Pancreas (tissue), 10 donors: ENCODE measurements at regions of chr14 and their contacts with region 1.

Region 1: DNA sequence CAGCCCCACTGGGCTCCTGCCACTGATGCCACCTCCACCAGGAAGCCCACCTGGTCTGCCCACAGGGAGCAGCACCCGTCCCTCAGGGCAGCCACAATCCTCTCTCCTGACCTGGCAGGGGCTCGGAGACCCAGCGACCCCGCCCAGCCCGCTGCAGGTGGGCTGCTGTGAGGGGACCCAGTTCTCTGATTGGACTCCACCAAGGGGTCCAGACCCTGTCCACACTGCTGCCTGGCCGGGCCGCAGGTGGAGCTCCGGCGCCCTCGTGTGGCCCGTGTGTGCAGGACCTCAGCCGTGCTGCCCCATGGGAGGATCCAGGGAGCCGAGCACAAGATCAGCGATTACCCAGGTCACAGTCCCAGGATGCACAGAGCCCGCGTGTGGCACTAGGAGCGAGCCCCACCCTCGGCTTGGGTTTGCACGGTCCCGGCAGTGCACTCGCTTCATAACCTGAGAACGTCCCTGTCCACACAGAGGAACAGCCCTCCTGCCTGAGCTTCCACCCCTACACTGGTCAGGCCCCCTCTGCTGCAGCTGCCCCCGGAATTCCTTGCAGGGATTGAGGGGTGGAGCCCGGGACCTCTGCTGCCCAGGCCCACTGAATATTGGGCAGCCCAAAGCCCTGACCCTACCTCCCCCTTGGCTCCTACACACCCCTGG is 35.4 kb upstream of the TMEM179 start:
- DNase-seq: peak in 5 of 6 donors; percentile 35 to 89 (median 74)
- ATAC-seq: peak; percentile 90 to 96 (median 94)
- H3K4me3 ChIP-seq: no peak overlapping the region
- H3K27ac ChIP-seq: no peak overlapping the region
- H3K4me1 ChIP-seq: peaks cover 0 to 6% (median 0%) of the 10 kb centered on the region in 3 donors
- H3K27me3 ChIP-seq: no peaks in the 10 kb centered on the region
- CTCF ChIP-seq: peak; percentile 73 to 87 (median 84)

Region 2: GRCh38 chr14:104137297-104138097 is 502.5 kb before region 1 on chr14:
- intact Hi-C with region 1: loop called in 2 of 3 experiments (anchors 5 to 10 kb)
- DNase-seq: peak; percentile 44 to 93 (median 79)
- ATAC-seq: peak; percentile 87 to 93 (median 91)
- H3K4me3 ChIP-seq: peak overlapping the region; percentile 33 to 51 (median 48)
- H3K27ac ChIP-seq: no peak overlapping the region
- H3K4me1 ChIP-seq: peaks cover 4 to 9% (median 5%) of the 10 kb centered on the region in 3 donors
- H3K27me3 ChIP-seq: peaks cover 0 to 14% (median 3%) of the 10 kb centered on the region in 4 donors
- CTCF ChIP-seq: peak; percentile 91 to 94 (median 93)

Region 3: DNA sequence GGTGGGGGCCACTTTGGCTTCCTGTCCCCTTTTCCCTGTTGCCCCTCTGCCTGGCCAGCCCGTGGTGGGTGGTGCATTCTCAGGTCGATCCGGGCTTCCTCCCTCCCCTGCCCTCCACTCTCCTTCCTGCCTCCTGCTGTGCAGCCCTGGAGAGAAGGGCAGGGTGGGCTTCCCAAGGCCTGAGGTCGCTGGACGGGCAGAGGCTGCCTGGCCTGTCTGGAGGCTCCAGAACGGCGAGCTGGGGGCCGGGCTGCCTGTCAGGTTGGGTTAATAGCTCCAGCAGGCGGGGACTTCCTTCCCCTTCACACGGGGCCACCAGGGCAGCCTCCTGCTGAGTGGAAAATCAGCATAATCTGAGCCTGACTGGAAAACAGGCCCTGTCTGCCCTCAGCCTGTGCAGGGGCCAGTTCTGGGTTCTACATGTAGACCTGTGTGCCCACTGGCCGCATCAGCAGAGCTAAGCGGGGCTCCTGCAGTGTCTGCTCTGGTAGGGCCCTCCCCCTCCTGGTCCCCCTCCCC is 490.3 kb before region 1 on chr14:
- intact Hi-C with region 1: loop called in 1 of 3 experiments (anchors 10 kb)
- DNase-seq: peak in 3 of 6 donors; percentile 47 to 69 (median 62)
- ATAC-seq: peak in 3 of 4 donors; percentile 20 to 56 (median 52)
- H3K4me3 ChIP-seq: peak overlapping the region in 1 of 4 donors; percentile 12
- H3K27ac ChIP-seq: peak overlapping the region in 2 of 4 donors; percentile 8 to 60
- H3K4me1 ChIP-seq: peaks cover 0 to 22% (median 5%) of the 10 kb centered on the region in 3 donors
- H3K27me3 ChIP-seq: no peaks in the 10 kb centered on the region
- CTCF ChIP-seq: no peak